ENCODE measurements at regions of chr9 and their contacts with region 1.

Region 1: GRCh38 chr9:113737517-113738271 is 138.4 kb upstream of the ZNF618 start:
- DNase-seq: peak; percentile 76
- ATAC-seq: peak; percentile 50; the same call in 1 of the 2 replicates
- H3K4me3 ChIP-seq: no peak overlapping the region
- H3K27ac ChIP-seq: no peak overlapping the region
- H3K4me1 ChIP-seq: peaks cover 9% of the 10 kb centered on the region; the same call in 1 of the 2 replicates
- H3K27me3 ChIP-seq: no peaks in the 10 kb centered on the region
- CTCF ChIP-seq: peak; percentile 75

Region 2: DNA sequence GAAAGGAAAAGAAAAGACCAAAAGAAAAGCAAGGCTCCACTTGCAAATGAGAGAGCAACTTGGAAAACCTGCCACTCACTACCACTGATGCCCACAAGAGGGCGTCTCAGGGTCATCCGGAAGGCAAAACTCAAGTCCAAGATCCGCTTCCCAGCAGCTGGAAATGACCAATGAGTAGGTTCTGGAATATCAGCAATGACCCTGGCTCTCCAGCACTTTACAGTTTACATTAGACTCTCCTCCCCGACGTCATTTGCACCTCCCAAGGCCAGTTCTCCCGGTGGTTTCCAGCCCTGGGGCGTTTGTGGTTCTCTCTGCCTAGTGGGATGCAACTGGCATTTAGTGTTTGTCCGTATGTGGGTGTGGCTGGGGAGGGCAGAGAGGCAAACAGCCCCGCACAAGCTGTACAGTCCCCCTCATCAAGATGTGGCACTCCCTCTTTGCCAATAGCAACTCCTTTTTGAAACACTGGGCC is 55.4 kb before region 1 on chr9:
- CTCF ChIA-PET with region 1: no interaction called
- POLR2A ChIA-PET with region 1: no interaction called
- intact Hi-C with region 1: loop called (anchors 5 kb)
- DNase-seq: peak; percentile 81
- ATAC-seq: peak; percentile 69
- H3K4me3 ChIP-seq: no peak overlapping the region
- H3K27ac ChIP-seq: peak overlapping the region; percentile 47
- H3K4me1 ChIP-seq: peaks cover 10% of the 10 kb centered on the region
- H3K27me3 ChIP-seq: no peaks in the 10 kb centered on the region
- CTCF ChIP-seq: peak; percentile 82

Region 3: GRCh38 chr9:113876151-113876992 is 138.7 kb after region 1 on chr9 and contains the start of gene ZNF618:
- CTCF ChIA-PET with region 1: no interaction called
- POLR2A ChIA-PET with region 1: no interaction called
- intact Hi-C with region 1: loop called (anchors 2 kb)
- DNase-seq: peak; percentile 41
- ATAC-seq: peak; percentile 75
- H3K4me3 ChIP-seq: peak within 1 kb of the TSS; percentile 86
- H3K27ac ChIP-seq: no peak within 1 kb of the TSS
- H3K4me1 ChIP-seq: no peaks in the 10 kb centered on the region; the same call in 1 of the 2 replicates
- H3K27me3 ChIP-seq: no peaks in the 10 kb centered on the region
- CTCF ChIP-seq: peak; percentile 38
- total RNA-seq, gene ZNF618: 4.2 and 5.8 TPM in 2 replicates

Region 4: GRCh38 chr9:113963017-113963620 is 225.4 kb after region 1 on chr9:
- CTCF ChIA-PET with region 1: no interaction called
- POLR2A ChIA-PET with region 1: no interaction called
- intact Hi-C with region 1: loop called (anchors 1 kb)
- DNase-seq: peak; percentile 47
- ATAC-seq: peak; percentile 22; the same call in 1 of the 2 replicates
- H3K4me3 ChIP-seq: no peak overlapping the region
- H3K27ac ChIP-seq: no peak overlapping the region
- H3K4me1 ChIP-seq: peaks cover 7% of the 10 kb centered on the region
- H3K27me3 ChIP-seq: no peaks in the 10 kb centered on the region
- CTCF ChIP-seq: peak; percentile 71